A549 (cell line): ENCODE measurements at regions of chr20 and their contacts with region 1.

Region 1: DNA sequence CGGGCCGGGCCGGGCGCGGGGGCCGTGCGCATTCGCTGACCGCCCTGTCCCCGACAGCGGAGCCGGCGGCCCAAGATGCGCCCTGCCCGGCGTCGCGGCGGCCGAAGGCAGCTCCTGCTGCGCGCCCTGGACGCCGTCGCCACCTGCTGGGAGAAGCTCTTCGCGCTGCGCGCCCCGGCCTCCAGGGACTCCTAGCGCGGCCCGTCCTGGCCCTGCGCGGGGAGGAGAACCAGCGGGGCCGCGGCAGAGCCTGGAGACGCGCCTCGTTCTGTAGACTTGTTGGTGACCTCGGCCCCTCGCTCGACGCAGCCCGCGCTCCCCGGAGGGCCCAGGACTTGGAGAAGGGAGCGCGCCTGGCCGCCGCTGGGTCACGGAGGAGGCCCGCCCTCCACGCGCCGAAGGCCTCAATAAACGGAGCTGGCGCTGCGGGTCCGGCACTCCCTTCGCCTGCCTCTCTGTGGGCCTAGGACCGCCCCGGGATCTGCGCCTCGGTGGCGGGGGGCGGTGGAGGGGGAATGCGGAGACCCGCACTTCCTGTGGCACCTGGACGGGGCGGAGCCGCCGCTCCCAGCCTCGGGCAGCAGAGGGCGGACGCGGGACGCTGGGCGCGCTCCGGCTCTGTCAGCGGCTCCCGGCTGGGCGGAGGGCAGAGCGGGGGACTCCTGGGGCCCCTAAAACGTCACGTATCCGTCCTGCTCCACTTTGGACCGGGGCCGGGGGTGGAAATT is 2.7 kb downstream of the C20orf204 start:
- DNase-seq: peak; percentile 85 to 91
- ATAC-seq: peak; percentile 76 to 88
- H3K4me3 ChIP-seq: peak overlapping the region; percentile 48
- H3K27ac ChIP-seq: peak overlapping the region; percentile 75 to 92
- H3K4me1 ChIP-seq: peaks cover 13% of the 10 kb centered on the region; the same call in 2 of the 3 replicates
- CTCF ChIP-seq: peak; percentile 56
- EP300 ChIP-seq: no peak
- POLR2A ChIP-seq: peak; percentile 19; the same call in 1 of the 2 replicates
- RAD21 ChIP-seq: peak; percentile 52 to 68; a peak in 4 of 5 replicates

Region 2: DNA sequence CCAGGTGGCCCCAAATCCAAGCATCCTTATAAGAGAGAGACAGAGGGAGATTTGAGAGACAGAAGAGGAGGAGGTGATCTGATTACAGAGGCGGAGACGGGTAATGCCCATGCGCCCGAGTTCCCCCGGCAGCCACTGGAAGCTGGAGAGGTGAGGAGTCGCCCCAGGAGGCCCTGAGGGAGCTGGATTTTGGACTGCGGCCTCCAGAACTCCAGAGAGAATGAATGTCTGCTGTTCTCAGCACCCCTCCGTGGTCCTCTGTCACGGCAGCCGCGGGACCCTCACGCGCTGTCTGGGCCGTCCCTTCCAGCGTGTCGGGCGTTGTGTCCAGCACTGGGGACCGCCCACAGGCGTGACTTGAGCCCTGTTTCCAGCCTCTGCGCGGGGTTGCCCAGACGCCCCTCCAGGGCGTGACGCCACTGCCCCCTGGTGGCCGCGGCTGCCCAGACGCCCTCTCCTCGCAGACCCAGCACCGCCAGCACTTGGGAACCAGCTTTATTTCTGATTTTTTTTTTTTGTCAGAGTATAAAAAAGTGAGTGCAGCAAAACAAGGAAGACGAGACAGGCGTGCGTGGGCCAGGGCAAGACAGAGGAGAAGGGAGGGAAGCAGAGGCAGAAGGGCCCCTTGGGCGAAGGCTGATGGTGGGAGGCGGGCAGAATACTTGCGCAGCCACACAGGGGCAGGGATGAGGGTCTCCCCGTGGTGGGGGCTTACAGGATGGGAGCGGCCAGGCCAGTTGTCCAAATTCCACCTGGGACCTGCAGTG is 64.9 kb before region 1 on chr20:
- CTCF ChIA-PET with region 1: interaction called, 28 read pairs
- POLR2A ChIA-PET with region 1: no interaction called
- DNase-seq: peak; percentile 86 to 87
- ATAC-seq: peak; percentile 67 to 92
- H3K4me3 ChIP-seq: peak overlapping the region; percentile 46
- H3K27ac ChIP-seq: peak overlapping the region; percentile 80 to 83
- H3K4me1 ChIP-seq: peaks cover 42% of the 10 kb centered on the region
- CTCF ChIP-seq: peak; percentile 97
- EP300 ChIP-seq: no peak
- POLR2A ChIP-seq: peak; percentile 56
- RAD21 ChIP-seq: peak; percentile 93 to 94

Region 3: DNA sequence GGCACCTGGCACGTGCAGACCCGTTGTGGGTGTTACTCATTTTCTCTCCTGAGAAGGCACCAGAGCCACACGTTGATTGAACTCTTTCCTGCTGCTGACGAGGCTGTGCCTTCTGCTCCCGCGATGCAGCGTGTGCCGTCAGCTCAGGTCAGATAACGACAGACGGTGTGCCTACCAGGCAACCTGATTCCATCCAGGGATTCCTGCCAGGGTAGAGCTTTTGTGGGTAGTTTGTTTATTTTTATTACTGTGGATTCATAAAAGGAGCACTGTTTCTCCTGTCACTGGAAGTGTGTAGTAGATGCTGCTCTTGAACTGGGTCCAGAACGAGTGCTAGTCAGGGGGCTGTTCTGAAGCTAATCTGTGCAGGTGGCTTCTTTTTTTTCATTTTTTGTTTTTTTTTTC is 37.1 kb before region 1 on chr20:
- CTCF ChIA-PET with region 1: interaction called, 22 read pairs
- POLR2A ChIA-PET with region 1: no interaction called
- DNase-seq: no peak
- ATAC-seq: no peak
- H3K4me3 ChIP-seq: no peak overlapping the region
- H3K27ac ChIP-seq: no peak overlapping the region
- H3K4me1 ChIP-seq: no peaks in the 10 kb centered on the region
- CTCF ChIP-seq: no peak
- EP300 ChIP-seq: no peak
- POLR2A ChIP-seq: no peak
- RAD21 ChIP-seq: no peak

Region 4: GRCh38 chr20:64024141-64024990 is 14.4 kb before region 1 on chr20:
- CTCF ChIA-PET with region 1: interaction called, 71 read pairs
- POLR2A ChIA-PET with region 1: no interaction called
- DNase-seq: no peak
- ATAC-seq: no peak
- H3K4me3 ChIP-seq: no peak overlapping the region
- H3K27ac ChIP-seq: no peak overlapping the region
- H3K4me1 ChIP-seq: no peaks in the 10 kb centered on the region
- CTCF ChIP-seq: no peak
- EP300 ChIP-seq: no peak
- POLR2A ChIP-seq: no peak
- RAD21 ChIP-seq: no peak

Region 5: DNA sequence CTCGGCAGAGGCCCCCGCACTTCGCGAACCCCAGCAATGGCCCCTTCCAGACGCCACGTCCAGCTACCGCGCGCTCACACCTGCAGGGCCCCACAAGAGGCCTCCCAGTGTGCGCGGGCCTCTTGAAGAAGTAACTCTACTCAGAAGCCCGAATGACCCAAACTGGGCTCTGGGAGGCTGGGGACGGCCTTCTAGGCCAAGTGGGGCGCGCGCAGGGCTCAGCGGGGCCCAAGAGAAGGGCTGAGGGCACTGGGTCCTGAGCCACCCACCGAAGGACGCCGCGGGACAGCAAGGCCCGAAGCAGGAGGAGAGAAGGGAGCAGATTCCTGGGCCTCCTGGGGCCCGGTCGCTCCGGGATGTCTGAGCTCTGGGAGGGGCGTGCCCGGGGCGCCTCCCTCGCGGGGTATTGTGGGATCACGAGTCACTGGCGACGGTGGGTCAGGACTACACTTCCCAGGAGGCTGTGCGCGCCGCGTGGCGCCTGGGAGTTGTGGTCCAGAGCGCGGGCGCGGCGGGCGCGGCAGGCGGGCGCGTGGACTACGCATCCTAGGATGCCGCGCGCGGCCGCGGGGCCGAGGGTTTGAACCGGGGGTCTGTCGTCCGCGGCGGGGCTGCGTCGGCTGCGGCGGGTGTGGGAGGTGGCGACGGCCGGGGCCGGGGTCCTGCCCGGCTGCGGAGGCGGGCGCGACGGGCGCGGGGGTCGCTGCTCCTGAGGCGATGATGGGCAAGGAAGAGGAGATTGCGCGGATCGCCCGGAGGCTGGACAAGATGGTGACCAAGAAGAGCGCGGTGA is 24.1 kb after region 1 on chr20 and contains the start of gene TCEA2:
- CTCF ChIA-PET with region 1: interaction called, 143 read pairs
- POLR2A ChIA-PET with region 1: interaction called, 13 read pairs
- DNase-seq: peak; percentile 96
- ATAC-seq: peak; percentile 83 to 91
- H3K4me3 ChIP-seq: peak within 1 kb of the TSS; percentile 97
- H3K27ac ChIP-seq: peak within 1 kb of the TSS; percentile 96 to 98
- H3K4me1 ChIP-seq: peaks cover 49% of the 10 kb centered on the region
- CTCF ChIP-seq: no peak
- EP300 ChIP-seq: no peak
- POLR2A ChIP-seq: peak; percentile 56
- RAD21 ChIP-seq: no peak
- polyA plus RNA-seq, gene TCEA2: 11.2 and 13.3 TPM in 2 replicates

Region 6: DNA sequence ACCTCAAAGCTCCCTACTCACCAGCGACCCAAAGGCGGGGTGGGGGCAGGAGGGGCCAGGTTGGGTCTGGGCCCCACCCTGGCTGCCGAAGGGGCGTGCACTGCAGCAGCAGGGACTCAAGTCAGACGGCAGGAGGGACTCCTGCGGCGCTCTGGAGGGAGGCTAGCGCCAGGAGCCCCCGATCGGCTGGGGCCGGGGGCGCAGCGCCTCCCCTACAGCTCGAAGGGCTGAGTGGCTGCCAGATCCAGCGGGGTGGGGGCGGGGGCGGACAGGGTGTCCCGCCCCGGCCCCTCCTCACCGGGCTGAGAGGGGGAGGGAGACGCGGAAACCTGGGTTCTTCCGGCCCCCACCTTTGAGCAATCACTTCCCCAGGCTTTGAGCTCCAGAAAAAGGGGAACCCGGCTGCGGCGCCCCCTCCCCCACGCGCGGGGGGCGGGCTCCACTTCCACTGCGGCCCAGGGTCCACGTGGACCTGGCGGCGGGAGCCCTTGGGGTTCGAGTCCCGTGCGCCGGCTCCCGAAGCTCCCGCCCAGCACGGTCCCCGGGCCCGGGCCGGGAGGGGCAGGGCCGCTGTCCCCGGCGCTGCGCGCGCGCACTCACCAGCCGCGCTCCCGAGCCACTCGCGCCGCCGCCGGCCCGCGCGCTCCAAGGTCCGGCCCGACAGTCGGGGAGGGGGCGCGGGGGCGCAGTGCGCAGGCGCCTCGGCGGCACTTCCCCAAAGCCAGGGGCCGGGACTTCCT is 40.7 kb after region 1 on chr20 and contains the start of gene RGS19:
- CTCF ChIA-PET with region 1: interaction called, 26 read pairs
- POLR2A ChIA-PET with region 1: no interaction called
- DNase-seq: peak in 1 of 2 experiments; percentile 72
- ATAC-seq: peak; percentile 15 to 49; a peak in 5 of 6 replicates
- H3K4me3 ChIP-seq: peak within 1 kb of the TSS; percentile 89
- H3K27ac ChIP-seq: peak within 1 kb of the TSS; percentile 93 to 96
- H3K4me1 ChIP-seq: peaks cover 27% of the 10 kb centered on the region
- CTCF ChIP-seq: no peak
- EP300 ChIP-seq: no peak
- POLR2A ChIP-seq: peak; percentile 25; the same call in 1 of the 2 replicates
- RAD21 ChIP-seq: no peak
- polyA plus RNA-seq, gene RGS19: 12.3 and 13.8 TPM in 2 replicates

Region 7: GRCh38 chr20:64119681-64120341 is 81.1 kb after region 1 on chr20:
- CTCF ChIA-PET with region 1: interaction called, 45 read pairs
- POLR2A ChIA-PET with region 1: no interaction called
- DNase-seq: no peak
- ATAC-seq: peak; percentile 16 to 39; a peak in 4 of 6 replicates
- H3K4me3 ChIP-seq: no peak overlapping the region
- H3K27ac ChIP-seq: no peak overlapping the region
- H3K4me1 ChIP-seq: no peaks in the 10 kb centered on the region
- CTCF ChIP-seq: no peak
- EP300 ChIP-seq: no peak
- POLR2A ChIP-seq: no peak
- RAD21 ChIP-seq: no peak